Activated T-helper 2 cell treated with anti-CD3 and anti-CD28 coated beads, Interferon-gamma antibody, Interleukin-2, Interleukin-4, amounts not matched to agents 10 μg/mL and 5 μg/mL and 100 μg/mL, durations not matched to agents 14 hours and 24 hours and 36 hours (primary cell): ENCODE measurements at regions of chr9 and their contacts with region 1.

Region 1: GRCh38 chr9:91150998-91151717 is 210.6 kb downstream of the AUH start:
- DNase-seq: peak; percentile 64
- H3K4me3 Mint-ChIP-seq: peak overlapping the region; percentile 52
- H3K27ac Mint-ChIP-seq: peak overlapping the region; percentile 96
- H3K4me1 Mint-ChIP-seq: peaks cover 90% of the 10 kb centered on the region
- H3K27me3 Mint-ChIP-seq: no peaks in the 10 kb centered on the region

Region 2: GRCh38 chr9:90898228-90898627 is 252.9 kb before region 1 on chr9:
- intact Hi-C with region 1: no loop called
- DNase-seq: no peak
- H3K4me3 Mint-ChIP-seq: no peak overlapping the region
- H3K27ac Mint-ChIP-seq: no peak overlapping the region
- H3K4me1 Mint-ChIP-seq: no peaks in the 10 kb centered on the region
- H3K27me3 Mint-ChIP-seq: peaks cover 7% of the 10 kb centered on the region

Region 3: GRCh38 chr9:90914868-90915483 is 236.2 kb before region 1 on chr9:
- intact Hi-C with region 1: loop called (anchors 10 kb)
- DNase-seq: peak; percentile 54
- H3K4me3 Mint-ChIP-seq: no peak overlapping the region
- H3K27ac Mint-ChIP-seq: peak overlapping the region; percentile 62
- H3K4me1 Mint-ChIP-seq: peaks cover 14% of the 10 kb centered on the region
- H3K27me3 Mint-ChIP-seq: no peaks in the 10 kb centered on the region

Region 4: DNA sequence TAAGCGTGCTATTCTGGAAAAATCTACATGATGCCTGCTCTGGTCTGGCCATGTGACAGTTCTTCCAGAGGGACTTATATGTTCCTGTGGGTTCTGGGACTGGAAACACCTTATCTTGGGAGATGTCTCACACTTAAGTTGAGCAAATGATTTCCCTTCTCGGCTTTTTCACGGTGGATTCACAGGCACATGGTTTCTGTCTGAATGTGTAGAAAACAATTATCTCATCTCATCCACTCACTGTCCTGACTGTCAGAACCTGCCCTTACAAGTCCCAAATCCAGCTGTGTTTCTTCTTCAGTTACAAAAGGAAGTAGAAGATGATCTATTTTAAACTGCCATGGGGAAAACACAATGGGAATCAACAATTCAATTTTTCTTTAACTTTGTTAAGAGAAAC is 165.5 kb before region 1 on chr9:
- intact Hi-C with region 1: loop called (anchors 1 kb)
- DNase-seq: no peak
- H3K4me3 Mint-ChIP-seq: no peak overlapping the region
- H3K27ac Mint-ChIP-seq: no peak overlapping the region
- H3K4me1 Mint-ChIP-seq: peaks cover 29% of the 10 kb centered on the region
- H3K27me3 Mint-ChIP-seq: no peaks in the 10 kb centered on the region

Region 5: GRCh38 chr9:91101611-91102168 is 49.5 kb before region 1 on chr9:
- intact Hi-C with region 1: loop called (anchors 1 kb)
- DNase-seq: peak; percentile 85
- H3K4me3 Mint-ChIP-seq: peak overlapping the region; percentile 78
- H3K27ac Mint-ChIP-seq: peak overlapping the region; percentile 93
- H3K4me1 Mint-ChIP-seq: peaks cover 64% of the 10 kb centered on the region
- H3K27me3 Mint-ChIP-seq: no peaks in the 10 kb centered on the region

Region 6: DNA sequence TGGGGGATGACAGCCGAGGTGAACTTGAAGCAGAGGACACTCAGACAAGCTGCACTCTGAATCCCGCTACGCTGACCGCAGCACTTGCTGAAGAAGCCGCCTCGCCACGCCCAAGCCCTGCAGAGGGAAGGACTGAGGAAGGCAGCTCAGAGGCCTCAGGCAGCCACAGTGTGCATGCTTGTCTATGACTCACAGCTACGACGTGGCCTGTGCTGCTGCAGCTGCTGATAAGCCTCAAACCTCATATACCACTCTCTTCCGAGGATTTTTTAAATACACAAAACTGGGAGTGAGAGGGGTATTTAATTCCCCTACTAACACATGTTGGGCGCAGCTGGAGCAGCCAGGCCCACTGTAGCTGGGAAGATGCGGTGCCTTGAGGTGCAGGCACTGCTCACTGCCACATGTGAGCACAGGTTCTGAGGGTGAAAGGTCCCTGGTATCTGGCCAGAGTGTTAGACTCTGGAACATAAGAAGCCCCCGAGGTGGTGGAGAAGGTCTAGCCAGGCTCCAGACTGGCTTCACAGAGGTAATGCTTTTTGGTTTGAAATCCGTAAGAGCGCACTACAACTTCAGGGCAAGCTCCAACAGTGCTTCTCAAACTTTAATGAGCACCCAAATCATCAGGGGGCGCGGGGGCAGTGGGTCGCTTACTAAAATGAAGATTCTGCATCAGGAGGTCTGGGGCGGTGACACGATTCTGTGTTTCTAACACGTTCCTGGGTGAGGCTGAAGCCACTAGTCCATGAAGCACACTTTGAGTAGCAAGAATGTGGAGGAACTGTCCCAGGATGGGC is 13.8 kb after region 1 on chr9:
- intact Hi-C with region 1: loop called (anchors 1 kb)
- DNase-seq: peak; percentile 82
- H3K4me3 Mint-ChIP-seq: peak overlapping the region; percentile 84
- H3K27ac Mint-ChIP-seq: peak overlapping the region; percentile 98
- H3K4me1 Mint-ChIP-seq: peaks cover 58% of the 10 kb centered on the region
- H3K27me3 Mint-ChIP-seq: no peaks in the 10 kb centered on the region

Region 7: GRCh38 chr9:91185193-91185886 is 34.2 kb after region 1 on chr9:
- intact Hi-C with region 1: no loop called
- DNase-seq: no peak
- H3K4me3 Mint-ChIP-seq: no peak overlapping the region
- H3K27ac Mint-ChIP-seq: peak overlapping the region; percentile 64
- H3K4me1 Mint-ChIP-seq: peaks cover 30% of the 10 kb centered on the region
- H3K27me3 Mint-ChIP-seq: no peaks in the 10 kb centered on the region

Region 8: DNA sequence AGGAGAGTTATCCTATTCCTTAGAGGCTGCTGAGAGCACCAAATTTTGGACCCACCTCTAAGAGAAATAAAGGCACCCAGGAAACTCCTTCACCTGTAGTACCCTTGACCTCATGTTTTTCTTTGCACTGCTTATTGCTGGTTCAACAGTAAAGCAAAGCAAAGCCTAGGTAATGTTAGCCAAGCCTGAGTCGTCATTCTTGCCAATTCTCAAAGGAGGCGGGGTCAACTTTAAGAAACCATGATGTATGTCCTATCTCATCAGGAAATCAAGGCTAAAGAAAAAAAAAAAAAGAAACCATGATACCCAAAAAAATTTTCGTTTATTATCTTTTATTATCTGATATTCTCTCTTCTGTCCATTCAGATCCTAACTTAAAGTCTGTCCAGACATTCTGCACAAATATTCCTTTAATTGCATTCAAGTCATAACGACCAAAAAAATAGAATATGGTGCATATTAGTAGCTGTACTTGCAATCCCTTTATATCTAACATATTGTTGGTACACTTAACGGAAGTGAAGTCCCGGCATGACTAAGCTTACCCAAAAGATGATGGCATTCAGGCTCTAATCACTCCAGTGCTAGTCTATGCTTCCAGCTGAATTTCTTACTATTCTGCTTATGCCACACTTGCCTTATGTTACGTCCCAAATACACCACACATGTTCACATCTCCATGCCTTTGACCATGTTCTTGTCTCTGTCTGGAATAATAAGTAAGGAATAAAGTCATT is 208.7 kb after region 1 on chr9:
- intact Hi-C with region 1: loop called (anchors 5 kb)
- DNase-seq: no peak
- H3K4me3 Mint-ChIP-seq: peak overlapping the region; percentile 98
- H3K27ac Mint-ChIP-seq: peak overlapping the region; percentile 99
- H3K4me1 Mint-ChIP-seq: peaks cover 64% of the 10 kb centered on the region
- H3K27me3 Mint-ChIP-seq: no peaks in the 10 kb centered on the region

Region 9: GRCh38 chr9:91711755-91712601 is 560.8 kb after region 1 on chr9:
- intact Hi-C with region 1: loop called (anchors 5 kb)
- DNase-seq: peak; percentile 72
- H3K4me3 Mint-ChIP-seq: no peak overlapping the region
- H3K27ac Mint-ChIP-seq: no peak overlapping the region
- H3K4me1 Mint-ChIP-seq: peaks cover 18% of the 10 kb centered on the region
- H3K27me3 Mint-ChIP-seq: peaks cover 8% of the 10 kb centered on the region